ENCODE measurements at regions of chr3 and their contacts with region 1.

Region 1: GRCh38 chr3:141699897-141700296 is 38.2 kb upstream of the RNF7 start:
- DNase-seq: no peak
- H3K4me3 Mint-ChIP-seq: no peak overlapping the region
- H3K27ac Mint-ChIP-seq: no peak overlapping the region
- H3K4me1 Mint-ChIP-seq: no peaks in the 10 kb centered on the region
- H3K27me3 Mint-ChIP-seq: peaks cover 7% of the 10 kb centered on the region

Region 2: DNA sequence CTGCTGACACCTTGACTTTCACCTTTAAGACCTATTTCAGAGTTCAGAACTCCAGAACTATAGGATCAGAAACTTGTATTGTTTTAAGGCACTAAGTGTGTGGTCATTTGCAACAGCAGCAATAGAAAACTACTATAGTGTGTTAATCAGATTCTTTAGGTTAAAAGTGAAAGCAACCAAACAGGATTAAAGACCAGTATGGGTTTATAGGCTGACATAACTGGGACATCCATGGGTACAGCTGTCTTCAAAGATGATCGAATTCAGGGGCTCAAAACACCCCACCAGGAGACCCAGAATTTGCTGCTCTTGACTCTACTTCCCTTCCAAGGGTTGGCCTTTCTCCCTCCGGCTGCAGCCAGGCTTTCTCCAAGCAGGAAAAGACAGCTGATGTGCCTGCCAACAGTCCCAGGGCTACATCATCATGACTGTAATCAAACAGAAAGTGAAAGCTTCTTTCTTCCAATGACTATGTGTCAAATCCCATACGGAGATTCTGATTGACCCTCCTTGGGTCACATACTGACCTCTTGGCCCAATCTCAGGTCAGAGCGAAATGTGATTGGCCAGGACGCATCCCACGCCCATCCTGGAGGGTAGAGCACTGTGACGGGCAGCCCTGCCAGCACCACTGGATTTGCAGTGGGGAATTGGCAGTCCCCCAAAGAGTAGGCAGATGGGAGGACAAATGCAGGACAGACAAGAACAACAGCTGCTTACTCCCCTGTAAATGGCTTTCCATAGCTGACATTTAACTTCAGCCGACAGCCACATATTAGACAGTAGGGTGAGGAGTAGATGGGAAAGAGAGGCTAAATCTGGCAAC is 13.2 kb before region 1 on chr3:
- intact Hi-C with region 1: loop called (anchors 1 kb)
- DNase-seq: no peak
- H3K4me3 Mint-ChIP-seq: peak overlapping the region; percentile 59
- H3K27ac Mint-ChIP-seq: peak overlapping the region; percentile 24
- H3K4me1 Mint-ChIP-seq: peaks cover 13% of the 10 kb centered on the region
- H3K27me3 Mint-ChIP-seq: no peaks in the 10 kb centered on the region

Region 3: DNA sequence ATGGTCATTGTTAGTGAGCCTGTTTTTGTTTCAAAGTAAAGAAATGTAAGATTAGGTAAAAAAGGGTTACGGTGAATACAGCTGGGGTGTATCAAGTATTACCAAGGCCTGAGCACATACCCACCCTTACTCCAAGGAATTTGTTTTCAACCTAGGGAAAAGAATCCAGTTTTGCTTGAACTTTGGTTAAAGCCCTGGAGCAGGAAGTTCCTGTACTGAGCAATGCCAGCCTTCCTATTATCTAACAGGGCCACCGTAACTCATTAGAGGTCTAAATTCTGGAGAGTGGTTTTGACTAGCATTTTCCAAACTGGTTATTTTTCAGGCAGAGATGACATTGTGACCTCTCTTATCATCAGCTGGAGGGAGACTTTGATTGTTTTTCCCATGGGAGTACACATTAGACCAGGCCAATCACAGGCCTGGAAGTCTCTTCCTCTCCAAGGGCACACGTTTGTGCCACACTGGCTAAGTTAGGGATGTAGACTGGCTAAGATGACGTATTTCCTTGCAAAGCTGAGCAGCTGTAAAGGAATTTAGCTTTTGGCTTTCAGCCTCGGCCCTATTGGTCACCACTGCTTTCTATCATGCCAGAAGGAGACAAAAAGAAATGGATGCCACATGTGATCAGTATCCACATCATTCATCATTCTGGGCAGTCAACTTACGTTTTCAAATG is 10.8 kb after region 1 on chr3:
- intact Hi-C with region 1: no loop called
- DNase-seq: no peak
- H3K4me3 Mint-ChIP-seq: no peak overlapping the region
- H3K27ac Mint-ChIP-seq: no peak overlapping the region
- H3K4me1 Mint-ChIP-seq: no peaks in the 10 kb centered on the region
- H3K27me3 Mint-ChIP-seq: peaks cover 5% of the 10 kb centered on the region

Region 4: DNA sequence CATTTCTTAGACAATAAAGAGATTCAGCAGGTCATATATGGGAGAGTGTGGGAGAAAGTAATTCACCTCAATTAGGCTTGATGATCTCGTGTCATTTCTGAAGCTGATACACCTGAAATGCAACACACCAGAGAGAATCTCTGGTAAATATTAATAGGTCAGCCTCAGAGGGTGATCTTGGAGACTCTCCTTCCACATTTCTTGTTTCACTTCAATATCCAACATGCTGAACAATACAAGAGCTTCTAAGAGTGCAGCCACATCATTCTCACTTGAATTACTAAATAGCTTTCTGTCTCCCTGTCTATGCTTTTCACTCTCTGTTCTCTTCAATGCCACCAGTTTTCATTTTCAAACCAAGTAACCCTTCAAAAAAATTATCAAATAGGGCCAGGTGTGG is 596.6 kb after region 1 on chr3:
- intact Hi-C with region 1: no loop called
- DNase-seq: no peak
- H3K4me3 Mint-ChIP-seq: no peak overlapping the region
- H3K27ac Mint-ChIP-seq: no peak overlapping the region
- H3K4me1 Mint-ChIP-seq: no peaks in the 10 kb centered on the region
- H3K27me3 Mint-ChIP-seq: no peaks in the 10 kb centered on the region